ENCODE measurements at regions of chr20 and their contacts with region 1.

Region 1: DNA sequence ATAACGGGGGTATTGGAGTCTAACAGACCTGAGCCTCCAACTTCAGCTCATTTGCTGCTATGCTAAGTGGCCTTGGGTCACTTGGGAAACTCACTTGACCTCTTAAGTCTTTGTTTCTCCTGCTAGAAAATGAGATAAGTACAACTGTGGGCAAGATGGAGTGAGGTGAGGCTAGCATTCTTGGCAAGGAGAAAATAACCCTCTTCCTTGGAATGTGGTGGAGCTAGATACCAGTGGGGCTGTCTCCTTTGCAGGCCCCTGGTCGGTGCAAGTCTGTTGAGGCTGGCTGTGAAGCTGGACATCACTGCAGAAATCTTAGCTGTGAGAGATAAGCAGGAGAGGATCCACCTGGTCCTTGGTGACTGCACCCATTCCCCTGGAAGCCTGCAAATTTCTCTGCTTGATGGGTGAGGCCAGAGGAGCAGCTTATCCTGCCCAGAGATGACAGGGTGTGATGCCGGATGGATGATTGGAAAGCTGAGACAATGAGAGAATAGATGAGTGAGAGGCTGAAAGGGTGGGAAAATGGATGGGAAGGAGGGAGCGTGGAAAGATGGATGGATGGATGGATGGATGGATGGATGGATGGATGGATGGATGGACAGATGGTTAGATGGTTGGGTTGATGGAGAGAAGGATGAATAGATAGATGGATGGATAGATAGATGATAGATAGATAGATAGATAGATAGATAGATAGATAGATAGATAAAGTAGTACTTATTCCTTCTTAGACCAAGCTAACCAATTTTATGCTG is 4.4 kb downstream of the BPIFA1 start:
- DNase-seq: no peak
- H3K4me3 ChIP-seq: no peak overlapping the region
- CTCF ChIP-seq: no peak

Region 2: DNA sequence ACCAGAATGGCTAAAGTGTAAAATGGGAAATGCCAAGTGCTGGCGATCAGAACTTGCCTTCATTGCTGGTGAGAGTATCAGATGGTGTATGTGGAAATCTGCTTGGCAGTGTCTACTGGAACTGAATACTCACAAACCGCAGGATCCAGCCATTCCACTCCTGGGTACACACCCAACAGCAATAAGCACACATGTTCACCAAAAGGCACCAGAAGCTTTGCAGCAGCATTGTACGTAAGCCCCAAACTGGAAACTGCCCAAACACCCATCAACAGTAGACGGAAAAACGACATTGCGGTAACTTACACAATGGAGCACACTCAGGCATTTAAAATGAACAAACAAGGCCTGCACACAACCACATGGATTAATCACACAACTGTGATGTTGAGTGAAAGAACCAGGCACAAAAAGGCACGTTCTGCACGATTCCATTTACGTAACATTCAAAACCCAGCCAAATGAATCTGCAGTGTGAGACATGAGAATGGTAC is 109.5 kb before region 1 on chr20:
- in situ Hi-C with region 1: loop called (anchors 5 kb)
- DNase-seq: no peak
- H3K4me3 ChIP-seq: no peak overlapping the region
- CTCF ChIP-seq: no peak

Region 3: DNA sequence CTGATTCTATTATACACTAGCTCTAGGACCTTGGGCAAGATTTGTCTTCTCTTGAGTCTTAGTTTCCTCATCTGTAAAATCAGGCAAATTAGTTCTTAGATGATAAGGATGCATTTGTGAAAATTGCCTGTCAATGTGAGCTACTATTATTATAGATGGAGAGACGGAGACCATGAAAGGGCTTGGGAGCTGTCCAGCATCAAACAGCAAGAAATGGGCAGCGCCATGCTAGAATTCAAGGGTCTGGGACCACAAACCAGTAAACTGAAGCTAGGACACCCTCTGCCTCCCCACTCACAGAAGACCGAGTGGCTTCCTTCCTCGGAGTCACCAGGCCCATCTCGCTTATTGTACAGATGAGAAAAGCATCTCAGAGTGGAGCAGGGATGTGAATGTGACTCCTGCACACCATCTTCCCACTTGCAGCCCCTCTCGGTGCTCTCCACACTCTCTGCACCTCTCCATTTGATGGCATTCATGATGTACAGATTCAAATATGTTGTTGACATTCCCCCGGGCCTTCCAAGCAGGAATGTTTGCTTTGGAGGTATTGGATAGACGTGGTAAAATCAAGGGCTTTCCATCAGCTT is 47.2 kb before region 1 on chr20:
- in situ Hi-C with region 1: no loop called
- DNase-seq: no peak
- H3K4me3 ChIP-seq: no peak overlapping the region
- CTCF ChIP-seq: no peak

Region 4: GRCh38 chr20:33475381-33476150 is 235.4 kb after region 1 on chr20:
- in situ Hi-C with region 1: no loop called
- DNase-seq: no peak
- H3K4me3 ChIP-seq: no peak overlapping the region
- CTCF ChIP-seq: no peak